Activated CD4-positive, alpha-beta T cell treated with anti-CD3 and anti-CD28 coated beads, Interleukin-2, amount 10 ng/mL, durations not matched to agents 7 days and 5 days (primary cell): ENCODE measurements at regions of chr7 and their contacts with region 1.

Region 1: GRCh38 chr7:50206453-50207250 is 97.9 kb upstream of the IKZF1 start:
- DNase-seq: peak; percentile 78
- H3K4me3 Mint-ChIP-seq: peak overlapping the region; percentile 51
- H3K27ac Mint-ChIP-seq: peak overlapping the region; percentile 93
- H3K4me1 Mint-ChIP-seq: peaks cover 95% of the 10 kb centered on the region
- H3K27me3 Mint-ChIP-seq: no peaks in the 10 kb centered on the region

Region 2: DNA sequence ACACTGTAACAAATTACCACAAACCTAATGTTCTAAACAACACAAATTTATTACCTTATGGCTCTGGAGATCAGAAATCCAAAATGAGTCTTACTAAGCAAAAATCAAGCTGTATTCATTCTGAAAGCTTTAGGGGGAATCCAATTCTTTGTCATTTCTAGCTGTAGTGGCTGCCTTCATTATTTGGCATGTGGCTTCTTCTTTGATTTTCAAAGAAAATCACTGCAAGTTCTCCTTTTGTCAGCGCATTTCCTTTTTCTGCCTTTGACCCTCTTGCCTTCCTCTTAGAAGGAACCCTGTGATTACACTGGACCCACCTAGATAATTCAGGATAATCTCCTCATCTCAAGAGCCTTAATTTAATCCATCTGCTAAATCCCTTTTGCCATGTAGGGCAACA is 150.5 kb before region 1 on chr7:
- CTCF ChIA-PET with region 1: no interaction called
- POLR2A ChIA-PET with region 1: no interaction called
- DNase-seq: no peak
- H3K4me3 Mint-ChIP-seq: no peak overlapping the region
- H3K27ac Mint-ChIP-seq: no peak overlapping the region
- H3K4me1 Mint-ChIP-seq: no peaks in the 10 kb centered on the region
- H3K27me3 Mint-ChIP-seq: peaks cover 28% of the 10 kb centered on the region

Region 3: DNA sequence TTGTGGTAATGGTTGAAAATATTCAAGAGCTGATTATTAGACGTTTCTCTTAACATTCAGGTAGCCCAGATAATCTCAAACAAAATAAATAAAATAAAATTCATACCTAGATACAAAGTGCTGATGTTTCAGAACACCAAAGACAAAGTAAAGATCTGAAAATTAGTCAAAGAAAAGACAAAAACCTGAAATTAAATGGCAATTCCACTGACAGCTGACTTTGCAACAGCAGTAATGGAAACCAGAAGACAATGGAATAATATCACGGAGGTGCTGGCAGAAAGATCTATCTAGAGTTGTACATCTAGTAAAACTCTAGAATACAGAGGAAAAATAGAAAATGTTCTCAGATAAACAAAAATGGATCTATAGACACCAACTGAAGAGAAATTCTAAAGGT is 39.9 kb after region 1 on chr7:
- CTCF ChIA-PET with region 1: no interaction called
- POLR2A ChIA-PET with region 1: no interaction called
- DNase-seq: no peak
- H3K4me3 Mint-ChIP-seq: no peak overlapping the region
- H3K27ac Mint-ChIP-seq: no peak overlapping the region
- H3K4me1 Mint-ChIP-seq: peaks cover 4% of the 10 kb centered on the region
- H3K27me3 Mint-ChIP-seq: no peaks in the 10 kb centered on the region

Region 4: GRCh38 chr7:50266635-50267386 is 60.2 kb after region 1 on chr7:
- CTCF ChIA-PET with region 1: interaction called, 26 read pairs
- POLR2A ChIA-PET with region 1: interaction called, 9 read pairs
- DNase-seq: peak; percentile 88
- H3K4me3 Mint-ChIP-seq: peak overlapping the region; percentile 52
- H3K27ac Mint-ChIP-seq: peak overlapping the region; percentile 98
- H3K4me1 Mint-ChIP-seq: peaks cover 93% of the 10 kb centered on the region
- H3K27me3 Mint-ChIP-seq: no peaks in the 10 kb centered on the region

Region 5: DNA sequence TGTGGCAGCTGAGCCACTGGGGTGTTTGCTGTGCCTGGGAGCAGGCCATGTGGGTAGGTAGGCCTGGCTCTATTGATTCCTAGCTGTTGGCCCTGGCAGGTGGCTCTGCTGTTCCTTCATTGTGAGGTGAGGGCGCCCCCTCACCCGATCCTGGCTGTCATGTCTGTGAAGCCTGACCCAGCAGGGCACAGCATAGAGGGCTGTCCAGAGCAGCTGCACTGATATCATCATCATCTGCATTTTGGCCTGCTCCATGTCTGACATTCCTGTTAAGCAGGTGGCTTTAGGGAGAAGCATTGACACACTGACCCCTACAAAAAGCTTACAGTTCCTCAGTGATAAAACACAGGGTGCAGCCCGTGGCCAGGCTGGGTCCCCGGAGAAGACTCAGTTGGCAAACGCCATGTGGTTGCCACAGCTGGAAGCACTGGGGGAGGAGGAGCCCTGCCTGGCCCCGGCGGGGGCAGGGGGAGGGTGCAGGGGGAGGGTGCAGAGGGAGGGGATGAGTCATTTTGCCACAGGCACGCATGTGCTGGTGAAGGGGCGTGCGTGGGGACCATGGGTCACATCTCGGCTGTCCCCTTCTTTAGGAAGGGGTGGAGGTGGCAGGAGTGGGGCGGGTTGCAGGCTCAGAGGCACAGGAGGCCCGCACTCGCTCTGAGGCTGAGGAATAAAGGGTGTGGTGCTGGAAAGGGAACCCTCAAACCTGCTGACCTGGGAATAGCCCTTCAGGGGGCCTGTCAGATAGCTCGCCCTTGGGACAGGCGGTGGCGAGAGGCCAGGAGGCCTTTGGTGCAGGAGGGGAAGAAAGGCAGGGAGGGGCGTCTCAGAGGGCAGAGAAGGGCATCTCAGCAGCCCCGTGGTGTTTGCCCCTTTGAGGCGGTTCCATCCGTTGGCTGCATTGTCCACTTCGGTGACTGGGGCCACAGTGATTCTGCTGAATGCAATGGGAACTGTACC is 129.4 kb after region 1 on chr7:
- CTCF ChIA-PET with region 1: interaction called, 18 read pairs
- POLR2A ChIA-PET with region 1: no interaction called
- DNase-seq: peak; percentile 81
- H3K4me3 Mint-ChIP-seq: no peak overlapping the region
- H3K27ac Mint-ChIP-seq: no peak overlapping the region
- H3K4me1 Mint-ChIP-seq: no peaks in the 10 kb centered on the region
- H3K27me3 Mint-ChIP-seq: no peaks in the 10 kb centered on the region

Region 6: GRCh38 chr7:50369143-50370026 is 162.7 kb after region 1 on chr7:
- CTCF ChIA-PET with region 1: interaction called, 106 read pairs
- POLR2A ChIA-PET with region 1: no interaction called
- DNase-seq: peak; percentile 72
- H3K4me3 Mint-ChIP-seq: peak overlapping the region; percentile 1
- H3K27ac Mint-ChIP-seq: peak overlapping the region; percentile 83
- H3K4me1 Mint-ChIP-seq: peaks cover 96% of the 10 kb centered on the region
- H3K27me3 Mint-ChIP-seq: no peaks in the 10 kb centered on the region